Kidney (tissue), 22 donors: ENCODE measurements at regions of chr6 and their contacts with region 1.

Region 1: DNA sequence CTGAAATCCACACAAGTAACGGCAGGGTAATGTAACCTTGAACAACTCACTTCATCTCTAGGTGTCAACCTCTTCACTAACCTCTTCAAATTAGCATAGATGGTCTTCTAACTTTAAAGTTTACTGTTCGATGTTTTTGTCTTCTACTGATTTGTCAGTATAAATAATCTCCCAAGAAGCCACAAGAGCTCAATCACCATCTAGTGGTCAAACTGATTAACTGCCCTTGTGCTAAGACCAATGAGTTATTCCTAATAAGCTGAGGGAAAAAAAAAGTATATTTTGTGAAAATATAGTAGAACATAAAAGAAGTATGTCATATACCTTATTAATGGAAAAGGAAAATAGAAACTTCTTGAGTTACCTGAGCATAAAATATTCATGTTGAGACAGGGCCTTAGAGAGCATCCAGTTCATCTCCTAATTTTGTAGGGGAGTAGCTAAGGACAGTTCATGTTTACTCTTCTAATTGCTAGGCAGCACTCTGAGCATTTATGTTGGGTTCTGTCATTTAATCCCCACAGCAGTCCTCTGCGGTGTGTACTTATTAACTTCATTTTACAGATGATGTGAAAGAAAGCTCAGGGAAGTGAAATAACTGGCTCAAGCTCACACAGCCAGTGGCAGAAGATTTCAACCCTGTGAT is 317.1 kb downstream of the ESR1 start:
- DNase-seq: peak in 2 of 5 donors; percentile 46 to 63
- H3K4me3 ChIP-seq: no peak overlapping the region
- H3K27ac ChIP-seq: no peak overlapping the region
- H3K4me1 ChIP-seq: peaks cover 0 to 3% (median 0%) of the 10 kb centered on the region in 3 donors
- H3K27me3 ChIP-seq: no peaks in the 10 kb centered on the region
- CTCF ChIP-seq: peak; percentile 82

Region 2: GRCh38 chr6:151690768-151691562 is 433.6 kb before region 1 on chr6:
- intact Hi-C with region 1: loop called (anchors 10 kb)
- DNase-seq: no peak
- H3K4me3 ChIP-seq: peak overlapping the region in 2 of 3 donors; percentile 64 to 69
- H3K27ac ChIP-seq: peak overlapping the region; percentile 47 to 86
- H3K4me1 ChIP-seq: no peaks in the 10 kb centered on the region
- H3K27me3 ChIP-seq: no peaks in the 10 kb centered on the region
- CTCF ChIP-seq: no peak

Region 3: GRCh38 chr6:151765444-151765886 is 359.1 kb before region 1 on chr6:
- intact Hi-C with region 1: loop called (anchors 10 kb)
- DNase-seq: peak in 3 of 5 donors; percentile 62 to 87 (median 77)
- H3K4me3 ChIP-seq: no peak overlapping the region
- H3K27ac ChIP-seq: no peak overlapping the region
- H3K4me1 ChIP-seq: no peaks in the 10 kb centered on the region
- H3K27me3 ChIP-seq: no peaks in the 10 kb centered on the region
- CTCF ChIP-seq: peak; percentile 60

Region 4: GRCh38 chr6:152595505-152595904 is 471.0 kb after region 1 on chr6:
- intact Hi-C with region 1: no loop called
- DNase-seq: peak in 2 of 5 donors; percentile 14 to 32
- H3K4me3 ChIP-seq: no peak overlapping the region
- H3K27ac ChIP-seq: no peak overlapping the region
- H3K4me1 ChIP-seq: peaks cover 0 to 7% (median 0%) of the 10 kb centered on the region in 3 donors
- H3K27me3 ChIP-seq: no peaks in the 10 kb centered on the region
- CTCF ChIP-seq: peak; percentile 35